Activated T-helper 1 cell treated with anti-CD3 and anti-CD28 coated beads, Interleukin-12 subunit alpha, Interleukin-12 subunit beta, Interleukin-2, Interleukin-4 antibody, amounts not matched to agents 30 ng/mL and 10 ng/mL and 1 ng/mL, durations not matched to agents 14 hours and 24 hours and 36 hours (primary cell): ENCODE measurements at regions of chr14 and their contacts with region 1.

Region 1: GRCh38 chr14:37903343-37904191 is 304.1 kb upstream of the SSTR1 start:
- DNase-seq: no peak
- H3K4me3 Mint-ChIP-seq: no peak overlapping the region
- H3K27ac Mint-ChIP-seq: no peak overlapping the region
- H3K4me1 Mint-ChIP-seq: no peaks in the 10 kb centered on the region
- H3K27me3 Mint-ChIP-seq: peaks cover 9% of the 10 kb centered on the region

Region 2: GRCh38 chr14:37796703-37797416 is 106.7 kb before region 1 on chr14:
- intact Hi-C with region 1: no loop called
- DNase-seq: no peak
- H3K4me3 Mint-ChIP-seq: no peak overlapping the region
- H3K27ac Mint-ChIP-seq: no peak overlapping the region
- H3K4me1 Mint-ChIP-seq: no peaks in the 10 kb centered on the region
- H3K27me3 Mint-ChIP-seq: no peaks in the 10 kb centered on the region

Region 3: DNA sequence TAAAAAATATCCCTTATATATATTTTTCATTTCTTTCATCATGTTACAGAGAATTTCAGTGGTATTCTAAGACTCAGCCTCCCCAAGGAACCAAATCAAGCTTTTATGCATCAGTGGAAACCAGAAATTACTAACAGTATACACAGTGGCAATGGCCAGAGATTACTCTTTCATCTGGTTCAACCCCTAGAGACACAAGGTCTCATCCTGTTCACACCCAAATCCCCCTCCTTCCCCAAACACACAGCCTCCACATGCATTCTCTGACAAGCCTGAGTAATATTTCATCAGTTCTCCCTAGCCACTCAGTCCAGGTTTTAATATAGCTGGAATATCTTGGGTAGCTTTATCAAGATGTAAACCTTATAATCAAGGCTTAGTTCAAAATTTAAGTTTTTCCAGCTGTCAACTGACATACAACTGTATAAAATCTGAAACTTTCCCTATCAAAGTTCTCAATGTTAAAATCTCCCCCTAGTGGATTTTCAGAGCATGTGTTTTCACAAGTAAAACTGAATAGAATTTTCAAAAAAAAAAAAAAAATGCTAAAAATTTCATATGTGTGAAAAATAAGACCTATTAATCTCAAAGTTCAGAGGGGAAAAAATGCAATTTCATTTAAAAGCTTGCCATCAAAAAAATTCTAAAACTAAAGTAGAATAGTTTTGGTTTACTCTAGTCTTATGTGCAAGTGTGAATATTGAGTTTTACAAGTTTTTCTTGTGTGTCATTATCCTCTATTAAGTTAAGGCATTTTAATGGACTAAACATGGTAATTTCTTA is 293.6 kb after region 1 on chr14:
- intact Hi-C with region 1: loop called (anchors 2 kb)
- DNase-seq: no peak
- H3K4me3 Mint-ChIP-seq: no peak overlapping the region
- H3K27ac Mint-ChIP-seq: no peak overlapping the region
- H3K4me1 Mint-ChIP-seq: no peaks in the 10 kb centered on the region
- H3K27me3 Mint-ChIP-seq: peaks cover 2% of the 10 kb centered on the region

Region 4: GRCh38 chr14:39015360-39015961 is 1111.9 kb after region 1 on chr14:
- intact Hi-C with region 1: loop called (anchors 2 kb)
- DNase-seq: no peak
- H3K4me3 Mint-ChIP-seq: no peak overlapping the region
- H3K27ac Mint-ChIP-seq: no peak overlapping the region
- H3K4me1 Mint-ChIP-seq: no peaks in the 10 kb centered on the region
- H3K27me3 Mint-ChIP-seq: no peaks in the 10 kb centered on the region